ENCODE measurements at regions of chr12 and their contacts with region 1.

Region 1: DNA sequence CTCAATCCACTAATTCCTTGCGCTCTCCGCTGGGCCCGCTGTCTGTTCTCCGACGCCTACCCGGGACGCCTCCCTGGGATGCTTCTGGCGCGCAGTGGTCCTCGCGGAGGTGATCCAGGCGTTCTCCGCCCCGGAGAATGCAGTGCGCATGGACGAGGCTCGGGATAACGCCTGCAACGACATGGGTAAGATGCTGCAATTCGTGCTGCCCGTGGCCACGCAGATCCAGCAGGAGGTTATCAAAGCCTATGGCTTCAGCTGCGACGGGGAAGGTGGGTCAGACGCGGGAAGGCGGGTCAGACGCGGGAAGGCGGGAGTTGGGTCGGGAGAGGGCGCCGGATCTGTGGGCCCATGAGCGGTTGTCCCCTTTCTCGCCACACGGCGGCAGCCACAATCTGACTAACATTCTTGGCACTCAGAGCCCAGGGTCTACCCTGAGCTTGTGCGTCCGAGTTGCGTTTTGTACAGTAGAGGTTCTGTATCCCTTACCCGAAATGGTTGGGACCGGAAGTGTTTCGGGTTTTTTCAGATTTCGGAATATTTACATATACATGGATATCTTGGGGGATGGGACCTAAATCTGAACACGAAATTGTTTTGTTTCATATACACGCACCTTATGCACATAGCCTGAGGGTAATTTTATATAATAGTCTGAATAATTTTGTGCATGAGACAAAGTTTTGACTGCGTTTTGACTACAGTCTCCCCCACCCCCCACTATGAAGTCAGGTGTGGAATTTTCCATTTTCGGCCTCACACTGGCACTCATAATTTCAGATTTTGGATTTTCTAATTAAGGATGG is 762 bp downstream of the C12orf57 start:
- DNase-seq: peak; percentile 94 to 96
- H3K4me3 ChIP-seq: peak overlapping the region; percentile 15 to 71 (median 65)
- H3K27ac ChIP-seq: peak overlapping the region; percentile 92 to 97 (median 92)
- H3K4me1 ChIP-seq: peaks cover 19 to 34% of the 10 kb centered on the region in 2 donors
- H3K27me3 ChIP-seq: no peaks in the 10 kb centered on the region
- CTCF ChIP-seq: peak; percentile 64 to 98 (median 88)
- POLR2A ChIP-seq: peak; percentile 20 to 79

Region 2: GRCh38 chr12:6965026-6965661 is 20.6 kb after region 1 on chr12:
- intact Hi-C with region 1: loop called (anchors 2 kb)
- DNase-seq: peak; percentile 86 to 91
- H3K4me3 ChIP-seq: peak overlapping the region in 1 of 3 donors; percentile 68
- H3K27ac ChIP-seq: peak overlapping the region; percentile 14 to 97 (median 79)
- H3K4me1 ChIP-seq: peaks cover 47 to 54% of the 10 kb centered on the region in 2 donors
- H3K27me3 ChIP-seq: no peaks in the 10 kb centered on the region
- CTCF ChIP-seq: peak; percentile 77 to 88 (median 85)
- POLR2A ChIP-seq: no peak

Region 3: GRCh38 chr12:7092229-7092985 is 147.8 kb after region 1 on chr12 and contains the start of gene C1R:
- intact Hi-C with region 1: loop called (anchors 5 kb)
- DNase-seq: peak; percentile 67 to 79
- H3K4me3 ChIP-seq: peak within 1 kb of the TSS in 1 of 3 donors; percentile 29
- H3K27ac ChIP-seq: peak within 1 kb of the TSS; percentile 14 to 65 (median 63)
- H3K4me1 ChIP-seq: peaks cover 0 to 21% of the 10 kb centered on the region in 2 donors
- H3K27me3 ChIP-seq: no peaks in the 10 kb centered on the region
- CTCF ChIP-seq: peak; percentile 76 to 90 (median 82)
- POLR2A ChIP-seq: peak in 1 of 2 donors; percentile 16
- total RNA-seq, gene C1R: 132 to 545 (median 312) TPM

Region 4: DNA sequence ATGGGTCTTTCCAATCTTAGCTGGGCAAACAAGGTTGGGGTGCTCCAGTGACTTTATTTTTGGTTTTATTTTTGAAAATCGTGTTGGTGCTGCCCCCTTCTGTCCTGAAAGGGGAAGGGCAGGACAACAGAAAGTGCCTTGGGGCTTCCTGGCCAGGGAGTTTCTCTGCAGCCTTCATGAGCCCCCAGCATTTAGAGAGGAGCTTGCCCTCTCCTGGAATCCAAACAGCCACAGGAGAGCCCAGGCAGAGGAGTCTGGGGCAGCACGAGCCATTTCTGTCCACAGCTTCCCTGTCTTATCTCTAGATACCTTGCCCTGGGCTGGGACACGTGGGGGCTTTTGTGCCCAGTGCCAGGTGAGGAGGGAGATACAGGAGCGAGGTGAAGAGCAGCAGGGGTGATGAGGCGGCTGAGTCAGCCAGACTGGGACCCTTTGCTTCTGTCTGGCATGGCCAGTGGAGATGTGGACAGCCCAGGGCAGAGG is 168.8 kb after region 1 on chr12:
- intact Hi-C with region 1: loop called (anchors 5 kb)
- DNase-seq: peak in 1 of 2 donors; percentile 35
- H3K4me3 ChIP-seq: no peak overlapping the region
- H3K27ac ChIP-seq: no peak overlapping the region
- H3K4me1 ChIP-seq: peaks cover 0 to 6% of the 10 kb centered on the region in 2 donors
- H3K27me3 ChIP-seq: no peaks in the 10 kb centered on the region
- CTCF ChIP-seq: peak; percentile 65 to 79 (median 73)
- POLR2A ChIP-seq: no peak

Measured in thyroid gland (tissue), 4 donors.